A549 (cell line): ENCODE measurements at regions of chr11 and their contacts with region 1.

Region 1: GRCh38 chr11:18768472-18768901 is 23.1 kb downstream of the PTPN5 start:
- DNase-seq: no peak
- ATAC-seq: no peak
- H3K4me3 ChIP-seq: no peak overlapping the region
- H3K27ac ChIP-seq: no peak overlapping the region
- H3K4me1 ChIP-seq: peaks cover 11% of the 10 kb centered on the region
- CTCF ChIP-seq: no peak
- EP300 ChIP-seq: no peak
- POLR2A ChIP-seq: no peak
- RAD21 ChIP-seq: no peak

Region 2: GRCh38 chr11:18534230-18534629 is 234.3 kb before region 1 on chr11:
- CTCF ChIA-PET with region 1: interaction called, 21 read pairs
- POLR2A ChIA-PET with region 1: no interaction called
- DNase-seq: no peak
- ATAC-seq: no peak
- H3K4me3 ChIP-seq: no peak overlapping the region
- H3K27ac ChIP-seq: no peak overlapping the region
- H3K4me1 ChIP-seq: peaks cover 25% of the 10 kb centered on the region
- CTCF ChIP-seq: no peak
- EP300 ChIP-seq: no peak
- POLR2A ChIP-seq: no peak
- RAD21 ChIP-seq: no peak

Region 3: DNA sequence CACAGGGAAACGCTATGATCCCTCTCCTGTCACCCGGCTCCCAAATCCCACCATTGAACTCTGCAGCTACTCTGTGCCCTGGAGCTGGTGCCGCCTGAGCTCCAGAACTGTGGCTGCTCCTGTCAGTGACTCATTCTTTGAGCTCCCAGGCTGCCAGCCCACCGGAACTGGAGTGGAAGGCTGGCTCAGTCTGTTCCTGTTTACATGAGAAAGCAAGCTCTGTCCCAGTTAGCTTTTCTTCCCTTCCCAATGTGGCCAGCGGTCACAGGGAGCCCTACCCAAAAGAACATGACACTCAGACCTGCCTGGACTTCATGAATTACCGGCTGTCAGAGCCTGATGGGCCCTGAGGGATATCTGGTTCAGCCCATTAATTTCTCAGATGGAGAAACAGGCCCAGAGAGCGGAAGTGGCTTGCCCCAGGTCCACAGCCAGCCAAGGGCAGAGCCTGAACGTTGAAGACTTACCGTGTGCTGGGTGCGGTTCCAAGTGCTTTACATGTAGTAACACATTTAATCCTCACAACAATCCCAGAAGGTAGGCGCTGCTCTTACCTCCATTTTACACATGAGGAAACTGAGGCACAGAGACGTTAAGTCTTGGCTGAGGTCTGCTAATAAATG is 18.7 kb before region 1 on chr11:
- CTCF ChIA-PET with region 1: interaction called, 51 read pairs
- POLR2A ChIA-PET with region 1: no interaction called
- DNase-seq: peak; percentile 37 to 53
- ATAC-seq: peak; percentile 75 to 88
- H3K4me3 ChIP-seq: no peak overlapping the region
- H3K27ac ChIP-seq: peak overlapping the region; percentile 59 to 81
- H3K4me1 ChIP-seq: peaks cover 15% of the 10 kb centered on the region; the same call in 2 of the 3 replicates
- CTCF ChIP-seq: no peak
- EP300 ChIP-seq: no peak
- POLR2A ChIP-seq: no peak
- RAD21 ChIP-seq: no peak

Region 4: GRCh38 chr11:18956630-18957029 is 188.1 kb after region 1 on chr11:
- CTCF ChIA-PET with region 1: no interaction called
- POLR2A ChIA-PET with region 1: no interaction called
- DNase-seq: no peak
- ATAC-seq: no peak
- H3K4me3 ChIP-seq: no peak overlapping the region
- H3K27ac ChIP-seq: no peak overlapping the region
- H3K4me1 ChIP-seq: no peaks in the 10 kb centered on the region
- CTCF ChIP-seq: no peak
- EP300 ChIP-seq: no peak
- POLR2A ChIP-seq: no peak
- RAD21 ChIP-seq: no peak